Mammary epithelial cell (primary cell): ENCODE measurements at regions of chr3 and their contacts with region 1.

Region 1: DNA sequence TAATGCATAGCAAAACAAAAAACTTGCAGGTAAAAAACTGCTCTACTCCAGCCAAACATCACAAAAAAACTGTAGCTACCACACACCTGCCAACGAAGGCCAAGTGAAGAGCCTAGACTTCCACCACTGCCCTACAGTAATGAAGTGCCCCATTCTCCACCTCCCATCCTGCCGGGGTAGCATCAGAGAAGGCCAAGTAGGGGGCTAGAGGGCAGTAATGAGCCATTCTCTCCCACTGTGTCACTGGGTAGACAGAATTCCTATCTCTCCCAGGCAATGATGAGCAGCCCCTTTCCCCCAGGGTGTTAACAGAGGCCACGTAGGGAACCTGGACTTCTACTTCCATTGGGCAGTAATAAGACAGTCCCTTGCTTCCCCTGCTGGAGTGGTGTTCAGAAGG is 9.5 kb downstream of the SEC22C start:
- DNase-seq: peak; percentile 35
- H3K4me3 ChIP-seq: no peak overlapping the region
- H3K27ac ChIP-seq: no peak overlapping the region
- H3K4me1 ChIP-seq: no peaks in the 10 kb centered on the region
- H3K27me3 ChIP-seq: no peaks in the 10 kb centered on the region
- CTCF ChIP-seq: peak; percentile 58 to 68

Region 2: DNA sequence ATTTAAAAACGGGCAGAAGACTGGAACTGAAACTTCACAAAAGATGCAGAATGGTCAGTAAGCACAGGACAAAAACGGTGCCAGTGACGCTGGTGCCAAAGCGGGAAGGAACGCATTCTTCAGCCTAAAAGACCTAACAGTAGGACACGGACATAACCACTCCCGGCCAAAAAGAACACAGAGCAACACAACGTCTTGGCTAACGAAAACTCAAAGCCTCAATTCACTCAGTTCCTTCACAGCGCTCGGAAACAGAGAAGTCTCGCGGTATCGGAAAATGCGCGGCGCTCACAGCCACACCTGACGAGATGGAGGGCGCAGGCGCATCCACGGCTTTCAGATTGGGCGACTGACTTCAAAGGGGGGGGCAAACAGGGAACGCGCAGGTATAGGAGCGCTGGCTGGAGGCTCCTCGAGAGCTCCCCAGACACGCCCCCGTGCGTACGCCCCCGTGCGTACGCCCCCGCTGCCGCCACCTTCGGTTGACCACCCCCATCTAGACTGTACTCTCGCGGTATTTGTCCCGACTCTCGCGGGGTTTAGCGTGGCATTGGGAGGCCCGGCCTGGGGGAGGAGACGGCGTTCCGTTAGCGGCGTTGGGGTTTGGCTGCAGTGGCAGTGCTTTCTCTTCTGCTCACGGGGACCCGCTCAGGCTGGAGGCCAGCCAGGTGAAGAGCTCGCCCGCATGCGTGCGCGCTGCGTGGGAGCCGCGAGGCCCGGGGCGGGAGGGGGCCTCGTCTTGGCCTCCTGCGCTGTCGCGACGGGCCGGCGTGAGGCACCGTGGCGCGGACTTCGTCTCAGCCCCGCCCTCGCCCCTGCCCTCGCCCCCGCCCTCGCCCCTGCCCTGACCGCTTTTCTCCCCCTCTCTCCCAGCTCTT is 28.1 kb after region 1 on chr3 and contains the start of gene NKTR:
- CTCF ChIA-PET with region 1: no interaction called
- dilution Hi-C with region 1: no loop called
- in situ Hi-C with region 1: no loop called
- intact Hi-C with region 1: loop called (anchors 2 kb)
- DNase-seq: peak; percentile 100
- H3K4me3 ChIP-seq: peak within 1 kb of the TSS; percentile 91 to 99 (median 98)
- H3K27ac ChIP-seq: peak within 1 kb of the TSS; percentile 75
- H3K4me1 ChIP-seq: peaks cover 14% of the 10 kb centered on the region
- H3K27me3 ChIP-seq: no peaks in the 10 kb centered on the region
- CTCF ChIP-seq: no peak
- total RNA-seq, gene NKTR: 57.2 to 59.3 TPM

Region 3: DNA sequence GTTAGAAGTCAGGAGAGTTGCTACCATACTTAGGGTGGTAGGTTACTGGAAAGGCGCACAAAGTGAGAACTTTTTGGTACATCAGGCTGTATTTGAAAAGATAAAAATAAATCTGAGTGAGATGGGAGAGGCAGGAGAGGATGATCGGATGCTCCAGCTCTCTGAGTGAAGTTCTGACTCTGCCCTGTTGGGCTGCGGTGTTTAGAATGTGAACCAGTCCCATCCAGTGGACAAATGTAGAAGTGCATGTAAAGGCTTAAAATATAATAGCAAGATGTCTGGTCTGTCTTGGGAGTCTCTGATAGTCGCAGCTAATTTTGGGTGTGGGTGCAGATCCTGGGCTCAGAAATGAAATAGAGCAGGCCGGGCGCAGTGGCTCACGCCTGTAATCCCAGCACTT is 267.3 kb after region 1 on chr3:
- CTCF ChIA-PET with region 1: no interaction called
- dilution Hi-C with region 1: no loop called
- in situ Hi-C with region 1: no loop called
- intact Hi-C with region 1: loop called (anchors 10 kb)
- DNase-seq: peak; percentile 60
- H3K4me3 ChIP-seq: no peak overlapping the region
- H3K27ac ChIP-seq: no peak overlapping the region
- H3K4me1 ChIP-seq: no peaks in the 10 kb centered on the region
- H3K27me3 ChIP-seq: no peaks in the 10 kb centered on the region
- CTCF ChIP-seq: peak; percentile 77 to 86